Breast epithelium (tissue), 4 donors: ENCODE measurements at regions of chr2 and their contacts with region 1.

Region 1: GRCh38 chr2:123093199-123093598 is 931.9 kb upstream of the CNTNAP5 start:
- DNase-seq: no peak
- H3K4me3 ChIP-seq: no peak overlapping the region
- H3K27ac ChIP-seq: no peak overlapping the region
- H3K4me1 ChIP-seq: no peaks in the 10 kb centered on the region
- H3K27me3 ChIP-seq: no peaks in the 10 kb centered on the region
- CTCF ChIP-seq: no peak
- POLR2A ChIP-seq: no peak

Region 2: GRCh38 chr2:123808243-123808642 is 715.0 kb after region 1 on chr2:
- intact Hi-C with region 1: loop called (anchors 5 kb)
- DNase-seq: no peak
- H3K4me3 ChIP-seq: no peak overlapping the region
- H3K27ac ChIP-seq: no peak overlapping the region
- H3K4me1 ChIP-seq: no peaks in the 10 kb centered on the region
- H3K27me3 ChIP-seq: no peaks in the 10 kb centered on the region
- CTCF ChIP-seq: no peak
- POLR2A ChIP-seq: no peak